Posterior vena cava (tissue), 2 donors: ENCODE measurements at regions of chr11 and their contacts with region 1.

Region 1: GRCh38 chr11:11520231-11521015 is 101.4 kb downstream of the GALNT18 start:
- DNase-seq: no peak

Region 2: GRCh38 chr11:11760838-11761237 is 240.4 kb after region 1 on chr11:
- intact Hi-C with region 1: loop called in 1 of 2 experiments (anchors 10 kb)
- DNase-seq: no peak